ENCODE measurements at regions of chr7 and their contacts with region 1.

Region 1: DNA sequence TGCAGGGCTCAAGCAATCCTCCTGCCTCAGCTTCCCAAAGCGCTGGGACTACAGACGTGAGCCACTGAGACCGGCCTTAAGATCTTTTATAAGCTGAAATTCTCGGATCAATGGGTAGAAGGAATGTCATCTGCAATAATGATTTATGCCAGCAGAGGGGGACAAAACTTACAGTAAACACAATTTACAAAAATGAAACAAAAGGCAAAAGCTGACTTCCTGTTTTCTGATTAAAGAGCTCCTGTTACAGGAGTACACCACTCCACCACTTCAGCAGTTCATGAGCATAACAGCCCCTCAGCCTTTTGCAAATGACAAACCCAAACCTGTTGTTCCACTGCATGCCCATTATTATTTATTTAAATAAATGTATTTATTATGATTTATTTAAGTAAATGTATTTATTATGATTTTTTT is 88.5 kb upstream of the ATP6V0A4 start:
- DNase-seq: peak; percentile 84
- H3K4me3 ChIP-seq: no peak overlapping the region
- H3K27ac ChIP-seq: no peak overlapping the region
- H3K4me1 ChIP-seq: no peaks in the 10 kb centered on the region
- H3K27me3 ChIP-seq: no peaks in the 10 kb centered on the region
- CTCF ChIP-seq: peak; percentile 45 to 52
- POLR2A ChIP-seq: no peak

Region 2: DNA sequence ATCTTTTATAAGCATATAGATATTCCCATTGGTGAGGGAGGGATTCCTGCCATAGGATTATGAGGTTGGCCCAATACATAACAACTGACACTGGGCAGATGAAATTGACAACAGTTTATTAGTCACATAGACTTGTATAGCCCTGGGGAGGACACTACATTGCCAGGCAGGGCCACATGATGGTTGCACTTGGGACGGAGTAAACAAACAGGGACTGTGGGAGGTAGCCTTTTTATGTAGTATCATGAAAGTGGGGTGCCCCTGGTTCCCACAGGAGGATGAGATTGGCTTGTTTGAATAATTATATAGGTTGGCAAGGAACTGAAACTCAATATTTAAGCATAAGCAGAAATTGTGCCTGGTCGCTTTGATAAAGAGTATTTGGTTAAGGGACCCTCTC is 403.0 kb before region 1 on chr7:
- CTCF ChIA-PET with region 1: no interaction called
- POLR2A ChIA-PET with region 1: no interaction called
- dilution Hi-C with region 1: no loop called
- intact Hi-C with region 1: no loop called
- DNase-seq: no peak
- H3K4me3 ChIP-seq: no peak overlapping the region
- H3K27ac ChIP-seq: no peak overlapping the region
- H3K4me1 ChIP-seq: no peaks in the 10 kb centered on the region
- H3K27me3 ChIP-seq: no peaks in the 10 kb centered on the region
- CTCF ChIP-seq: no peak
- POLR2A ChIP-seq: no peak

Region 3: GRCh38 chr7:138875794-138876193 is 10.7 kb before region 1 on chr7:
- CTCF ChIA-PET with region 1: interaction called, 44 read pairs
- POLR2A ChIA-PET with region 1: no interaction called
- dilution Hi-C with region 1: no loop called
- intact Hi-C with region 1: no loop called
- DNase-seq: no peak
- H3K4me3 ChIP-seq: no peak overlapping the region
- H3K27ac ChIP-seq: no peak overlapping the region
- H3K4me1 ChIP-seq: no peaks in the 10 kb centered on the region
- H3K27me3 ChIP-seq: no peaks in the 10 kb centered on the region
- CTCF ChIP-seq: no peak
- POLR2A ChIP-seq: no peak

Region 4: DNA sequence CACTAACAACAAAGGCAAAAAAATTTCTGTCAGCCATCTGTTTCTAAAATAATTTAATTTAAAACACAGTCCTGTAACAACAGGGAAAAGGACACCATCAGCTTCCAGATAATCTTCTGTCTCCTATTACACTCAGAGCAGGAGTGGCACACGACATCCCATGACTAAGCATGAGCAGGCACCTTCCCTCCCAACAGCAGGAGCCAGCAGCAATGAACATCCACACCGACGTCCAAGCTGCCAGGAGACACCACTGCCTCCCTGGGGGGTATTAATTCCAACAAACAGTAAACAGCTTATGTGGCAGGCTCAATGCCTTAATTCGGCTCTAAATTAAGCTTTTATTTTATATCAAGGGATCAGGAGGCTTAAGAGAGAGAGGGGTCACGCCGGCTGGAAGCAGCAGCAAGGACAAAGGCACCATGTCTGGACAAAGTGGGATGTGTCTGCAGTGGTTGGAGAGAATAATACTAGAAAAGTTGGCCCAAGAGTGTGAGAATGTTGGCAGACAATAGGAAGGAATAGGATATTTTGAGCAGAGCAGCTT is 49.0 kb after region 1 on chr7:
- CTCF ChIA-PET with region 1: interaction called, 9 read pairs
- POLR2A ChIA-PET with region 1: no interaction called
- dilution Hi-C with region 1: no loop called
- intact Hi-C with region 1: loop called (anchors 1 kb)
- DNase-seq: peak; percentile 77
- H3K4me3 ChIP-seq: peak overlapping the region in 1 of 3 experiments; percentile 24
- H3K27ac ChIP-seq: peak overlapping the region; percentile 88
- H3K4me1 ChIP-seq: peaks cover 37% of the 10 kb centered on the region
- H3K27me3 ChIP-seq: no peaks in the 10 kb centered on the region
- CTCF ChIP-seq: no peak
- POLR2A ChIP-seq: no peak

Region 5: DNA sequence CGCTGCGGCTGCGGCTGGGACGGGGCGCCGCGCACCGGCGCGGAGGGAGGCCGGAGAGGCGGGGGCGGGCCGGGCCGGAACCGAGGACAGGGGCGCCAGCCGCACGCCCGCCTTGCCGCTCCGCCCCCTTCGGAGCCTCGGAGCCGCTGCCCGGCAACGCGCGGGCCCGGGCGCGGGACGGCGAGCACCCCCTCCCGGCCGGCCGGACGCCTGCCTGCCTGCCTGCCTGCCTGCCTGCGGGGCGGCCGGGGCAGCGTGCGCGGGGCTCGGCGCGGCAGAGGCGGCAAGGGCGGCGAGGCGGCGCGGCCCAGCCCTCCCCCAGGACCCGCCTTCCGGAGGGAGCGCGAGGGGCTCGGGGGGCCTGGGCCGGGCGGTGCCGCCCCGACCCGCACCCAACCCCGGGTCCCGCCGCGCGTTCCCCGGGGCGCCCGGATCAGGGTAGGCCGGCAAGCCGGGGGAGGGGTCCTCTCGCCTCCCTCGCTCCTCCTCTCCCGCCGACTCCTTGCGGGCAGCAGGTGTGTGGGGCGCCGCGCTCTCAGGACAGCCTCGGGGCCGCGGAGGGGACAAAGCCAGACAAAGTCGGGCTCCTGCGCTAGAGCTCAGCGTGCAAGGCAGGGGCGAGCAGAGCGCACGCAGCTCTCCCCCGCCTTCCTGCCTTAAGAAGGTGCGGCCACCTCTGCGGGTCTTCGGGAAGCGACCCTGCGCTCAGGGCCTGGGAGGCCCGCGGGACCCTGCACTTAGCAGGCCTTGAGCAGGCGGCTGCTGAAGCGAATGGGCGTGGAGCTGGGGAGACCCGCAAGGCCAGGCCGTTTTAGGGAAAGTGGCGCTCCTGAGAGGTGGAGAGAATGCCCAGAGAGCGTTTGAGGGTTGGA is 95.1 kb after region 1 on chr7 and contains the start of gene KIAA1549:
- CTCF ChIA-PET with region 1: interaction called, 117 read pairs
- POLR2A ChIA-PET with region 1: no interaction called
- dilution Hi-C with region 1: no loop called
- intact Hi-C with region 1: loop called (anchors 1 kb)
- DNase-seq: peak; percentile 62
- H3K4me3 ChIP-seq: peak within 1 kb of the TSS; percentile 59 to 93 (median 72)
- H3K27ac ChIP-seq: no peak within 1 kb of the TSS
- H3K4me1 ChIP-seq: peaks cover 24% of the 10 kb centered on the region
- H3K27me3 ChIP-seq: no peaks in the 10 kb centered on the region
- CTCF ChIP-seq: peak; percentile 6 to 21
- POLR2A ChIP-seq: no peak
- total RNA-seq, gene KIAA1549: 10.9 and 12.4 TPM in 2 replicates

Region 6: GRCh38 chr7:139035586-139036353 is 149.3 kb after region 1 on chr7 and contains the start of gene ZC3HAV1L:
- CTCF ChIA-PET with region 1: interaction called, 8 read pairs
- POLR2A ChIA-PET with region 1: no interaction called
- dilution Hi-C with region 1: no loop called
- intact Hi-C with region 1: loop called (anchors 5 kb)
- DNase-seq: peak; percentile 84
- H3K4me3 ChIP-seq: peak within 1 kb of the TSS; percentile 35 to 85 (median 63)
- H3K27ac ChIP-seq: peak within 1 kb of the TSS; percentile 20
- H3K4me1 ChIP-seq: peaks cover 10% of the 10 kb centered on the region
- H3K27me3 ChIP-seq: no peaks in the 10 kb centered on the region
- CTCF ChIP-seq: no peak
- POLR2A ChIP-seq: peak; percentile 92
- total RNA-seq, gene ZC3HAV1L: 23.8 and 25.7 TPM in 2 replicates

Region 7: DNA sequence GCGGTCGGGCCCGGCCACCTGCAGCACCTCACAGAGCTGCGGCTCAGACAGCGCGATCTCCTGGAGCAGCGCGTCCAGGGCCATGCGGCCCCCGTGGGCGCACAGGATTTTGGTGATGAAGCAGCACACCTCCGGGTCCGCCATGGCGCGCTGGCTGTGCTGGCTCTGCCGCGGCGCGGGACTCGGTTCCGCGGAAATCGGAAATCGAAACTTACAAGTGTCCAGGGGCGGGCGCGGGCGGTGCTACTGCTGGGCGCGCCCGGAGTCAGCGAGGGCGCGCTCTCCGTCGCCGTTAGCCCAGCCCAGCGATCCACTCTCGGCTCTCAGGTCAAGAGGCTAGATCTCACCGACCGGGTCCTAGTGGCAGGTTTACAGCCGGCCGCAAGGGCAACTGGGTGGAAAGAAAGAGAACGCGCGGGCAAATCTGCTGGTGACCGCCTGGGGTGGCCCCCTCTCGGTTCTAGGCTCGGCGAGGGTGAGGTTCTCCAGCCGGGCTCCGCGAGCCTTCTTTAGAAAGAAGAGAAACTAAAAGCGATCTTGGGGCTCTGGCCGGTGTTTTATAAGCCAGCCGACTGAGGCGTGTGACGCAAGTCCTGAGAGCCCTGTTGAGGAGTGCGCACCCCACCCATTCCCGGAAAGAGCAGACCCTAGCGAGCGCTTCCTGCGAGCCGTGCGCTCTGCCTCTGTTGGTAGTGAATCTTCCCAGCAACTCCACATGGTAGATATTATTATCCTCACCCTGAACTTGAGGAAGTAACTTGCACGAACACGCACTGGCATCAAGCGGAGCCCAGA is 222.9 kb after region 1 on chr7 and contains the start of gene ZC3HAV1:
- CTCF ChIA-PET with region 1: no interaction called
- POLR2A ChIA-PET with region 1: no interaction called
- dilution Hi-C with region 1: no loop called
- intact Hi-C with region 1: loop called (anchors 1 kb)
- DNase-seq: peak; percentile 79
- H3K4me3 ChIP-seq: peak within 1 kb of the TSS; percentile 69 to 87 (median 71)
- H3K27ac ChIP-seq: peak within 1 kb of the TSS; percentile 64
- H3K4me1 ChIP-seq: peaks cover 13% of the 10 kb centered on the region
- H3K27me3 ChIP-seq: no peaks in the 10 kb centered on the region
- CTCF ChIP-seq: no peak
- POLR2A ChIP-seq: peak; percentile 92
- total RNA-seq, gene ZC3HAV1: 36.8 and 37.7 TPM in 2 replicates